Left ventricle myocardium inferior (tissue), 1 donor: ENCODE measurements at regions of chr5 and their contacts with region 1.

Region 1: GRCh38 chr5:63963080-63963735 is 963 bp upstream of the HTR1A start:
- DNase-seq: no peak
- H3K4me3 ChIP-seq: no peak overlapping the region
- H3K27ac ChIP-seq: no peak overlapping the region
- H3K4me1 ChIP-seq: no peaks in the 10 kb centered on the region
- H3K27me3 ChIP-seq: peaks cover 49% of the 10 kb centered on the region
- CTCF ChIP-seq: peak; percentile 54

Region 2: GRCh38 chr5:63401436-63402046 is 561.7 kb before region 1 on chr5:
- intact Hi-C with region 1: loop called (anchors 10 kb)
- DNase-seq: peak; percentile 37
- H3K4me3 ChIP-seq: no peak overlapping the region
- H3K27ac ChIP-seq: no peak overlapping the region
- H3K4me1 ChIP-seq: no peaks in the 10 kb centered on the region
- H3K27me3 ChIP-seq: peaks cover 10% of the 10 kb centered on the region
- CTCF ChIP-seq: peak; percentile 76

Region 3: GRCh38 chr5:64125521-64125920 is 162.3 kb after region 1 on chr5:
- intact Hi-C with region 1: no loop called
- DNase-seq: no peak
- H3K4me3 ChIP-seq: no peak overlapping the region
- H3K27ac ChIP-seq: no peak overlapping the region
- H3K4me1 ChIP-seq: no peaks in the 10 kb centered on the region
- H3K27me3 ChIP-seq: no peaks in the 10 kb centered on the region
- CTCF ChIP-seq: no peak